Tibial artery (tissue), 4 donors: ENCODE measurements at regions of chr2 and their contacts with region 1.

Region 1: DNA sequence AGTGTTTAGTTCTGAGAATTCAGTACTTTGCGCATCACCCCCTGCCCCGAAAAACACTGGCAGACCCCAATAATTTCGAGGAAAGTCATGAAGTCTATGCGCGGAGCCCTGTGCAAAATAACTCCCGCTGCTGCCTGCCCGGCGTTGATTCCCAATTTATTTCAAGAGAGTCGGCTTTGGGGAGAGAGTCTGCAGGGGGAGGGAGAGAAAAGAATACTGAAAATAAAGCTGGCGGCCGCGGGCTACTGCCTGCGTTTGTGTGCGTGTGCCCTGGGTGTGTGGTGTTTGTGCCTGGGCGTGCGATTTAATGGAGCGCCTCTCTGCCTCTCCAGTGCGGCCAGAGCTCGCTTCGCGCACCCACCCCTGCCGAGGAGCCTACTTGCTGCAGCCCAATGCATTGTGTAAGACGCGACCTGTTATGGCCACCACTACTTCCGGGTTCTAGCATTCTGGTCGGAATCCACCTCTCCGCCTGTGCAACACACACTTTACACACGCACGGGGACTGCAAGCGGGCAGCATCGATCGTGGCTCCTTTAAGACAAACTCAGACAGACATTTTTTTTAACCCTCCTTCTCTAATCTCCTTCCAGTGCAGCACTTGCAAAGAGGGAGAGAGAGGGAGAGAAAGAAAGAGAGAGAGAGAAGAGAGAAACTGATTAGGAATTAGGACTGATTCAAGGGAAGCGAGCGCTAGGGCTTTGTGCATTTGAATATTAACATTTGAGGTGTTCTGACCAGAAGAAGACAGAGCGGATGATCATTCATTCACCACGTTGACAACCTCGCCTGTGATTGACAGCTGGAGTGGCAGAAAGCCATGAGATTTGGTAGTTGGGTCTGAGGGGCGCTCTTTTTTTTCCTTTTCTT is at the start of gene MEIS1:
- DNase-seq: peak; percentile 94 to 96
- H3K4me3 ChIP-seq: peak within 1 kb of the TSS; percentile 68 to 81
- H3K27ac ChIP-seq: peak within 1 kb of the TSS; percentile 83 to 84
- H3K4me1 ChIP-seq: peaks cover 0 to 6% (median 3%) of the 10 kb centered on the region in 4 donors
- H3K27me3 ChIP-seq: no peaks in the 10 kb centered on the region
- CTCF ChIP-seq: peak in 1 of 2 experiments; percentile 9

Region 2: DNA sequence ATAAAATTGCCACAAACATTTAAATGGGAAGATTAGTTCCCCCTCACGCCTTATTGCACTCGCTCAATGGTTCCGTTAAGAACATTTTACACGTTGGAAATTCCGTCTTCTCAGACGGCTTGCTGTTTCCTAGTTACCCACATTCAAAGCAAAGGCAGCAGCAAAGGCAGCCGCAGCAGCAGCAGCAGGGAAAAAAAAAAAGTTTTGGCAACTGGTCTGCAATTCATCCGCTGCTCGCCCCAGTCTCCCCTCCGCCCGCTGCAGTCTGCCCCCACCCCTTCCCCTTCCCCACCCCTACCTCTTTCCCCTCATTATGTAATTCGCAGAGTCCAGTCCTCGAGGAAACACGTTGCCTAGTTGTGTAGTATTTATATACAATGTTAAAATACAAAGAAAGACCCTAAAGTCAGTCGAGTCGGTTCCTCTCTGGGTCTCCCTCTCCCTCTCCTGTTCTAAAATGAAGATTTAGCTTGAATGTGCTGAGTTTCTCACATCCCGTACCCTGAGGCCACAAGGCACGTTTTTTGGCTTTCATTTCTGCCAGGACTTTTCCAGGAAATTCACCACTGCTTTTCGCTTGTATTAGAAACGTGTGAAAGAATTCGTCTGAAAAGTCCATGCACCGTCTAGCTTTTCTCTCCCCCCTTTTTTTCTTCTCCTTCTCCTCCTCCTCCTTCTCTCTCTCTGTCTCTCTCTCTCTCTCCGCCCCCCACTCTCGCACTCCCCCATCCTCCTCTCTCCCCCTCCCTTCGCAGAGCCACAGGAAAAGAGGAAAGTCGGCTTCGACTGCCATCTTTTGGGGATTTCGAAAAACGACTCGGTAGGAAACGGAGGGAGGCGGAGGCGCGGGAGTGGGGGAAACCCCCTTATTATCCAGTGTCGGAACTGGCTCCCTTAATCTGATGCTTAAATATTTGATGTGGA is 140.0 kb after region 1 on chr2:
- intact Hi-C with region 1: loop called (anchors 2 kb)
- DNase-seq: peak in 1 of 2 donors; percentile 73
- H3K4me3 ChIP-seq: peak overlapping the region; percentile 55 to 75
- H3K27ac ChIP-seq: peak overlapping the region; percentile 40 to 50
- H3K4me1 ChIP-seq: peaks cover 0 to 30% (median 26%) of the 10 kb centered on the region in 4 donors
- H3K27me3 ChIP-seq: peaks cover 5 to 44% of the 10 kb centered on the region in 2 donors
- CTCF ChIP-seq: peak; percentile 29 to 45

Region 3: DNA sequence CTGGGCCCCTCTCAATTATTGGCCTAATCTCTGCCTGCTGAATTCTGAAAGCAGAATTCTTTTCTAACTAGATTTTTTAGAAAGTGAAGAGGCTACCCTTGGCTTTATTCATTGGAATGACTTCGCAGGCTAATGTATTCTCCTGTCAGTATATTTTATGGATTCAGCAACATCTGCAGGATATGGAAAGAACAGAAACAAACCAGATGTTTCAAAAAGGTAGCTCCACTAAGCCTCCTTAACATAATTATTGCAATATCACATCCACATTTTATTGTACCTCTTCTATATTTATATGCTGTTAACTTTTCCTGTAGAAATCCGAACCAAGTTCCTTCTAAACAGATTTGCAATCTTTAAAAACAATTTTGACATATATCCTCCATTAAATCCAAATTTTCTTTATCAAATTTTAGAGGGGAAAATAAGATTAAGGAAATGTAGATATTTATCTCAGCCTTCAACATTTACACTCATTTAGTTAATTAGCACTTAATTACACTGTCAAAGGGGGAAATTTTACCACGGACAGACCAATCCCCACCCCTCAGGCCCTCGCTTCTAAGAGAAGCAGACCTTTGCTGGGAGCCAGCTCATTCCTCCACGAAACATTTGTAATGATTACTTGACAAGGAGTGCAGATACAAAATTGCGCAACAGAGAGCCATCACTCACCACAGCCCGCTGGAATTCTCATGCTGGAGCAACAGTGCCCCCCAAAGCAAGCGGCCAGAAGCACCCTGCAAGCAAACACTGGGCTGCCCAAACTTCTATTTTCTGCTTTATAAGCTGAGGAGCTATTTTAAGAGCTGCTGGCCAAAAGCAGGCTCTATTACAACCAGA is 1215.6 kb after region 1 on chr2:
- intact Hi-C with region 1: loop called (anchors 5 kb)
- DNase-seq: peak; percentile 85 to 91
- H3K4me3 ChIP-seq: no peak overlapping the region
- H3K27ac ChIP-seq: peak overlapping the region; percentile 18 to 32
- H3K4me1 ChIP-seq: peaks cover 0 to 41% (median 16%) of the 10 kb centered on the region in 4 donors
- H3K27me3 ChIP-seq: no peaks in the 10 kb centered on the region
- CTCF ChIP-seq: peak; percentile 62 to 69

Region 4: GRCh38 chr2:67840460-67841068 is 1405.7 kb after region 1 on chr2:
- intact Hi-C with region 1: loop called (anchors 5 kb)
- DNase-seq: peak; percentile 35 to 79
- H3K4me3 ChIP-seq: no peak overlapping the region
- H3K27ac ChIP-seq: no peak overlapping the region
- H3K4me1 ChIP-seq: no peaks in the 10 kb centered on the region
- H3K27me3 ChIP-seq: no peaks in the 10 kb centered on the region
- CTCF ChIP-seq: peak; percentile 72 to 80

Region 5: DNA sequence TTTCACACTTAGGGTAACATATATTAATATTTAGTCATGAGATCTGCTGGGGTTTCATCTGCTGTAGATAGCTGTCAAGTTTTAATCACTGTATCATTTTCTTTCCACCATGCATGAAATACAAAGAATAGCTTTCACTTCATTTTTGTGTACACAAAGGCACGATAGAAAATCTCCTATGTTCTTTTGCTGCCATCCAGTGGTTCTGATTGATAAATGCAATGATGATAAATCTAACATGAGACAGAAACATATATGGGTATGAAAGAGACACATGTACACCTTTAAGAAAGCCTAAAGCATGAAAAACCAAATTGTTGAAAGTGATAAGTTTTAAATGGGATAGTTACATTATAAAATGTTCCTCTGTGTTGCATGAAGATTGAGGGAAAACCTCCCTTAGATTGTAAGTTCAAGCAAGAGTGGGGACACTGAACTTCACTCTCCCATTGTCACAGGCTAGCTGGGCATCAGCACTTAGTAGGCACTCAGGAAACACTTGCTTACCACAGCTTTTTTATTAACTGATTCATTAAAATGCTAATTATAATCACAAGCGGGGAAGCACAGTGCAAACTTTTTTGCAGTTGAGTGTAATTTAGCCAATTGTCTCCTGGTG is 1596.7 kb after region 1 on chr2:
- intact Hi-C with region 1: loop called (anchors 10 kb)
- DNase-seq: no peak
- H3K4me3 ChIP-seq: no peak overlapping the region
- H3K27ac ChIP-seq: no peak overlapping the region
- H3K4me1 ChIP-seq: peaks cover 0 to 4% (median 0%) of the 10 kb centered on the region in 4 donors
- H3K27me3 ChIP-seq: no peaks in the 10 kb centered on the region
- CTCF ChIP-seq: peak; percentile 80 to 84